ENCODE measurements at regions of chr11 and their contacts with region 1.

Region 1: DNA sequence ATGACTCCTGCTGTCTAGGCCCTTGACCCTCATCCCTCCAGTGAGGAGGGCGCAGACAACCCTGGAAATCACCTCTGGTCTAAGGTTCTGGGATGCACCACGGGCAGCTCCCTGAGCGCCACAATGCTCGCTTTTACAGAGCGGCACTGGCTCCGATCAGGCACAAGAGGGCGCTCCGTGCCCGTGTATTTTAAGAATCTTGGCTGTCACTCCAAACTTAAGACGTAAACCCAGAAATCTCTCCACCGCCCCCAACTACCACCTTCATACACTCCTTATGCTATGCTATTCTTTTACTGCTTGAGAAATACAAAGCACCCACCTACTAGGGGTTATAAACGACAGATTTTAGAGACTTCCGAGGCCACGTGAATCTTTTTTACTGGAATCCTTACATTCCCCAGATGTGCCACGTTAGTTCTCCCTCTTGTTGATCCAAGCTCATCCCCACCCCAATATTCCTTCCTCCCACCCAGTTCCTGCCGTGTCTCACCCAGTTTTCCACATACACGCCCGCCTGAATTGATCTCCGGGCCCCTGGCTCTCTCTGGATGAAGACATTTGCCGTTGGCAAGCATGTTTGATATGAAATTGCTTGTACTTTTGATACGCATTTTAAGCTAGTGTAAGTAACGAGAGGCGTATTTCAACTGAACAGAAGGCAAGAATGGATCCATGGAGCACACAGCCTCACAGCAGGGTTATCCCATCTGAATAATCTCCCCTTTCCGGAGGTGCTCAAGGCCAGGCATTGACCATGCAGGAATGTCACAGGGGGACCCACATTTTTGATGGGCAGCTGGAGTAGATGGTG is 453.5 kb downstream of the OPCML start:
- DNase-seq: no peak
- H3K4me3 Mint-ChIP-seq: no peak overlapping the region
- H3K27ac Mint-ChIP-seq: no peak overlapping the region
- H3K4me1 Mint-ChIP-seq: no peaks in the 10 kb centered on the region
- H3K27me3 Mint-ChIP-seq: no peaks in the 10 kb centered on the region
- CTCF ChIP-seq: peak; percentile 63

Region 2: GRCh38 chr11:133104009-133104744 is 25.4 kb after region 1 on chr11:
- CTCF ChIA-PET with region 1: no interaction called
- POLR2A ChIA-PET with region 1: no interaction called
- intact Hi-C with region 1: no loop called
- DNase-seq: no peak
- H3K4me3 Mint-ChIP-seq: no peak overlapping the region
- H3K27ac Mint-ChIP-seq: no peak overlapping the region
- H3K4me1 Mint-ChIP-seq: no peaks in the 10 kb centered on the region
- H3K27me3 Mint-ChIP-seq: no peaks in the 10 kb centered on the region
- CTCF ChIP-seq: no peak

Region 3: GRCh38 chr11:133163463-133164419 is 84.9 kb after region 1 on chr11:
- CTCF ChIA-PET with region 1: interaction called, 11 read pairs
- POLR2A ChIA-PET with region 1: no interaction called
- intact Hi-C with region 1: loop called (anchors 2 kb)
- DNase-seq: no peak
- H3K4me3 Mint-ChIP-seq: no peak overlapping the region
- H3K27ac Mint-ChIP-seq: no peak overlapping the region
- H3K4me1 Mint-ChIP-seq: no peaks in the 10 kb centered on the region
- H3K27me3 Mint-ChIP-seq: no peaks in the 10 kb centered on the region
- CTCF ChIP-seq: peak; percentile 30

Region 4: DNA sequence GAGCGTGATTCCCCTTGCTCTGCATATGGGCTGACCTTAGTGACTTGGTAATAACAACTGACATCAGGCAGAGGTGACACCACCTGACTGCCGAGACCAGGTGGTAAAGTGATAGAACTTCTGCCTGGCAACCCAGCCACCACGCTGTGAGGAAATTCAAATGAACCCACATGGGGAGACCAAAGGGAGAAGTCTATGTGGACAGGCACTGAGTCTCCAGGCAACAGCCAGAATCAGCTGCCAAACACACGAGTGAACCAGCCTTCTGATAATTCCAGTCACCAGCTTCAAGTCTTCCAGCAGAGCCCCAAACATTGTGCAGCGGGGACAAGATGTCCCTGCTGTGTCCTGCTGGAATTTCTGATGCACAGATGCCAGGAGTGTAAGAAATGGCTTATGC is 736.8 kb after region 1 on chr11:
- CTCF ChIA-PET with region 1: interaction called, 10 read pairs
- POLR2A ChIA-PET with region 1: no interaction called
- intact Hi-C with region 1: no loop called
- DNase-seq: no peak
- H3K4me3 Mint-ChIP-seq: no peak overlapping the region
- H3K27ac Mint-ChIP-seq: no peak overlapping the region
- H3K4me1 Mint-ChIP-seq: peaks cover 6% of the 10 kb centered on the region
- H3K27me3 Mint-ChIP-seq: peaks cover 11% of the 10 kb centered on the region
- CTCF ChIP-seq: no peak

Measured in MCF 10A (cell line).